GM12878 (cell line): ENCODE measurements at regions of chr2 and their contacts with region 1.

Region 1: GRCh38 chr2:101831351-101831865 is 133.9 kb downstream of the MAP4K4 start:
- DNase-seq: no peak
- ATAC-seq: peak; percentile 91
- H3K4me3 ChIP-seq: no peak overlapping the region
- H3K27ac ChIP-seq: no peak overlapping the region
- H3K4me1 ChIP-seq: peaks cover 6% of the 10 kb centered on the region
- H3K27me3 ChIP-seq: no peaks in the 10 kb centered on the region
- CTCF ChIP-seq: peak; percentile 72 to 79 (median 75)
- EP300 ChIP-seq: no peak
- POLR2A ChIP-seq: no peak
- RAD21 ChIP-seq: peak; percentile 68

Region 2: DNA sequence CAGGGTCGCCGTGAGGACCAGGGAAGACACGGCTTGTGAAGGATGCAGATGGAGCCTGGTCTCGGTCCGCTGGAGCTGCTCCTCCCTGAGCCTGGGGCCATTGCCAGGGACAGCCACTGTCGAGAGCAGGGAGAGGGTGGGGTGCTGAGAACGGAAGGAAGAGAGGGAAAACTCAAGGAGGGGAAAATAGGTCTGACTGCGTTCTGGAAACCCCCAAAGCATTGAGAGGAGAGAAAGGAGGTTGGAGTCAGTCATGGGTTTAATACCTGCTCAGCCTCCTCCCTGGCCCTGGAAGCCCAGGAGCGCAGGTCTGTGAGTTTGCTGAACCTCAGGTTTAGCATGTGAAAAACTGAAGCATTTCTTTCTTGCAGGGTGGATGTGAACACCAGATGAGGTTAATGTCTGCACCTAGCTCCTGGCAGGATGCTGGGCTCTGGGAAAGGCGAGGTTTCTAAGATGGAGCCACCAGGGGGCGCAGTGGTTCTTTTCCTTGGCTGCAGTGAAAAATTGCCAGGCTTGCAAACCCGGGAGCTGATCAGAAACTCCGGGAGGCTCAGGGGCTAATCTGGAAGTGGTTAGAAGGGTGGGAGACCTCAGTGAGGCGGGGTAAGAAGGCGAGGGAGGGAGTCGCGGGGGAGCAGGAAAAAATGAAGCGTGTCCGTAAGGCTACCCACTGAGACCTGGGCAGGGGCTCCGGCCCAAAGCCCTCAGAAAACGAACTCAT is 489.3 kb before region 1 on chr2:
- CTCF ChIA-PET with region 1: interaction called, 32 read pairs
- POLR2A ChIA-PET with region 1: no interaction called
- RAD21 ChIA-PET with region 1: interaction called, 9 read pairs
- SMC1A ChIA-PET with region 1: interaction called, 9 read pairs
- in situ Hi-C with region 1: loop called (anchors 10 kb)
- intact Hi-C with region 1: loop called (anchors 1 kb)
- DNase-seq: no peak
- ATAC-seq: peak; percentile 83
- H3K4me3 ChIP-seq: no peak overlapping the region
- H3K27ac ChIP-seq: no peak overlapping the region
- H3K4me1 ChIP-seq: no peaks in the 10 kb centered on the region
- H3K27me3 ChIP-seq: no peaks in the 10 kb centered on the region; a peak in 1 of 4 replicates
- CTCF ChIP-seq: peak; percentile 78 to 88 (median 82)
- EP300 ChIP-seq: no peak
- POLR2A ChIP-seq: no peak
- RAD21 ChIP-seq: peak; percentile 71

Region 3: DNA sequence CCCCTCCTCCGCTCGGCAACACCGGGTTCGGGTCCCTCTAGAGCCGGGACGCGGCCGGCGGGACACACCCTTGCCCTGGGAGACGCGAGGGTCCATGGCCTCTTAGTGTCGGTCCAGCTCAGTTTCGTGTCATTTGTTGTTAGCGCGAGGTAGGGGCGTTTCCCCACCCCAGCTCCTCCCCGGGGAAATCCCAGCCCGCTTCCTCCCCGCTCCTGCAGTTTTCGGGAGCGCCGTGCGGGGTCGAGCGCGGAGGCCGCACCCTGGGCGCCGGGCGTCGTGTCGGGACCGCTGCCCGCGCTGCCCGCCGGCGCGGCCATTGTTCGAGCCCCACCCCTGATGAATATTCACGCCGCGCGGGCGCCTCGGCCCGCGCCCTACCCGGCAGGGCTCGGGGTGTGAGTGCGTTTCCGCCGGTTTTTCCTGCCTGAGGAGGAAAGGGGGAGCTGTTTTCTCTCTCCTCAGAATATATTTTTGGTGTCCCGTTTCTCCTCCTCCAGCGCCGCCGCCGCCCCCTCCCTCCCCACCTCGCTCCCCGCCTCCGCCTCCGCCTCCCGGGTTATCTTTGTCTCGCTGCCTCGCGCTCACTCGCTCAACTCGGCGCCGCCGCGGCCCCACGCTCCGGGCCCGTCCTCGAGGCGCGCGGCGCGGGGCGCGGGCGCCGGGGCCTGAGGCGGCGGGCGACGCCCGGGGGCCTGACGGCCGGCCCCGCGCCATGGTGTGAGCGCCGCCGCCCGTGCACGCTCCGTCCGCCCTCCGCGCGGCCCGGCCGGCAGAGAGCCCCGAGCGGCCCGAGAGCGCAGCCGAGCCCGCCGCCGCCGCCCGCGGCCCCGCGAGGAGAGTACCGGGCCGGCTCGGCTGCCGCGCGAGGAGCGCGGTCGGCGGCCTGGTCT is 134.0 kb before region 1 on chr2 and contains the start of gene MAP4K4:
- CTCF ChIA-PET with region 1: interaction called, 6 read pairs
- POLR2A ChIA-PET with region 1: no interaction called
- RAD21 ChIA-PET with region 1: interaction called, 9 read pairs
- SMC1A ChIA-PET with region 1: interaction called, 20 read pairs
- in situ Hi-C with region 1: no loop called
- intact Hi-C with region 1: loop called (anchors 5 kb)
- DNase-seq: no peak
- ATAC-seq: peak; percentile 68
- H3K4me3 ChIP-seq: peak within 1 kb of the TSS; percentile 49
- H3K27ac ChIP-seq: no peak within 1 kb of the TSS
- H3K4me1 ChIP-seq: no peaks in the 10 kb centered on the region; the same call in 1 of the 2 replicates
- H3K27me3 ChIP-seq: peaks cover 2 to 22% of the 10 kb centered on the region in 2 experiments; a peak in 3 of 4 replicates
- CTCF ChIP-seq: peak in 1 of 3 experiments; percentile 10; a peak in 1 of 6 replicates
- EP300 ChIP-seq: no peak
- POLR2A ChIP-seq: 0 out of 2 replicates have a peak, but pooled peaks have one; percentile 24
- RAD21 ChIP-seq: no peak
- polyA plus RNA-seq, gene MAP4K4: 1.9 to 2.5 TPM

Region 4: DNA sequence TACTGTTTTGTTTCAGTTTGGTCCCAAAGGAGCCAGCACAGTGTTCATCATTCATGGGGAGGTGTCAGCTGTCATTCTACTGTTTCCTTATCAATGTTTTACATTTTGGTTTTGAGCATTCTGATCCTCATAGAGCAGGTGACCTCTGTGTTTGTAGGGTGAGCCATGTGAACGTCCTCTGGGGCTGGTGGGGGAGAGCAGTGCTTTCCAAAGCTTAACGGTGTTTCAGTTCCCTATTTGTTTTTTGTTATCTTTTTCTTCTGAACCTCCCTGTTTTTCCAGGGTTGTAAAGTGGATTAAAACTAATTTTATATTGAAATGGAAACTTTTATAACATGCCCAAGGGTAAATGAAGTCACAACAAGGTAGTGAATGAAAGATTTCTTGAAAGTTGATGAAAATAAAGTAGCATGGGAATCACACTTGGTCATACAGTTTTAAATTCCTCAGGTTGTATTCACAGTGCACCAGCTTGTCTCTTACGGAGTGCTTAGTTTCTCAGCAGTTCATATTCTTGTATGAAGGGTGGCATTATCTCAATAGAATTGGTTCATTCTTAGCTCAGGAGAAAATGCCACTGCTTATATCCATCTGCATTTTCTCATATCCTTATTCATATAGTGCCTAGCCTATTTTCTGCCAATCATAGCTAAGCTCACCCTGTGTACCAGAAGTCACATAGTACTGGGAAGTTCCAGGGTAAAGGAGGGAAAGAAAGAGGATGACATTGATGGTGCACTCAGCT is 79.4 kb before region 1 on chr2:
- CTCF ChIA-PET with region 1: interaction called, 4 read pairs
- POLR2A ChIA-PET with region 1: interaction called, 3 read pairs
- RAD21 ChIA-PET with region 1: interaction called, 12 read pairs
- SMC1A ChIA-PET with region 1: interaction called, 8 read pairs
- in situ Hi-C with region 1: no loop called
- intact Hi-C with region 1: loop called (anchors 5 kb)
- DNase-seq: peak; percentile 66
- ATAC-seq: peak; percentile 80
- H3K4me3 ChIP-seq: no peak overlapping the region
- H3K27ac ChIP-seq: no peak overlapping the region
- H3K4me1 ChIP-seq: peaks cover 49% of the 10 kb centered on the region
- H3K27me3 ChIP-seq: no peaks in the 10 kb centered on the region
- CTCF ChIP-seq: no peak
- EP300 ChIP-seq: peak; percentile 92 to 95; a peak in 3 of 4 replicates
- POLR2A ChIP-seq: no peak
- RAD21 ChIP-seq: no peak

Region 5: DNA sequence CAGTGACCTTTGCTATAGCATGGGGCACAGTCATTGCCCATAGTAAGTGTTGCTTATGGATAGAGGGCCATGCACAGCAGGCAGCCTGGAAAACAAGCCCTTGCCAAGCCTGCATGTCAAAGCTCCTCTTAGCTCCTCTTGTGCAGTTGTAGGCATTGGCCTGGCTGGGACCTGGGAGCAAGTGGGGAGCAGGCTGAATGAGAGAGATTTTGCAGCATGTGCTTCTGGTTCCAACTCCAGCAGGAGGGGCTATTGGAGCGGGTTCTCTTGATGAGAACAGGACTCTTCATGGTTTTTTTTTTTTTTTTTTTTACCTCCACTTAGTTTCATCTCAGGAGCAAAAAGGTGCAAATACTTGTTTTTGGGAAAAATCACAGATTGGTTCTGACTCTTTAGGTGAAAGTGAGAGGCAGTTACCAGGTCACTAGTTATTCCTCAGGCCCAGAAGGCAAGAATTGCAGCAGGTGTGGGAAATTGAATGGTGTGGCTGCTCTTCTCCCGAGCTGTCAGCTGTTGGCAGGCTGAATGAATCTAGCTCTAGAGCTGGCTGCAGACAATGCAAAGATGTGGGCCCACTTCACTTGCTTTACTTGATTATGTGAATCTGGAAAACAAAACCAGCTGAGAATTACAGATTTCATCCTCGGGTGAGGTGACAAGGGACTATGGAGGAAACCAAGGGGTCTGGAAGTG is 38.0 kb before region 1 on chr2:
- CTCF ChIA-PET with region 1: interaction called, 15 read pairs
- POLR2A ChIA-PET with region 1: no interaction called
- RAD21 ChIA-PET with region 1: interaction called, 4 read pairs
- SMC1A ChIA-PET with region 1: interaction called, 4 read pairs
- in situ Hi-C with region 1: no loop called
- intact Hi-C with region 1: no loop called
- DNase-seq: no peak
- ATAC-seq: no peak; the same call in 2 of the 3 replicates
- H3K4me3 ChIP-seq: no peak overlapping the region
- H3K27ac ChIP-seq: no peak overlapping the region
- H3K4me1 ChIP-seq: no peaks in the 10 kb centered on the region
- H3K27me3 ChIP-seq: no peaks in the 10 kb centered on the region
- CTCF ChIP-seq: peak in 1 of 3 experiments; percentile 14; a peak in 1 of 6 replicates
- EP300 ChIP-seq: no peak
- POLR2A ChIP-seq: no peak
- RAD21 ChIP-seq: 0 out of 2 replicates have a peak, but pooled peaks have one; percentile 22

Region 6: GRCh38 chr2:101850450-101850849 is 19.0 kb after region 1 on chr2:
- CTCF ChIA-PET with region 1: interaction called, 10 read pairs
- POLR2A ChIA-PET with region 1: interaction called, 3 read pairs
- RAD21 ChIA-PET with region 1: interaction called, 3 read pairs
- SMC1A ChIA-PET with region 1: interaction called, 4 read pairs
- in situ Hi-C with region 1: no loop called
- intact Hi-C with region 1: no loop called
- DNase-seq: no peak
- ATAC-seq: no peak
- H3K4me3 ChIP-seq: no peak overlapping the region
- H3K27ac ChIP-seq: no peak overlapping the region
- H3K4me1 ChIP-seq: no peaks in the 10 kb centered on the region
- H3K27me3 ChIP-seq: no peaks in the 10 kb centered on the region
- CTCF ChIP-seq: no peak
- EP300 ChIP-seq: no peak
- POLR2A ChIP-seq: no peak
- RAD21 ChIP-seq: no peak

Region 7: GRCh38 chr2:102155642-102156491 is 324.5 kb after region 1 on chr2:
- CTCF ChIA-PET with region 1: no interaction called
- POLR2A ChIA-PET with region 1: no interaction called
- RAD21 ChIA-PET with region 1: no interaction called
- SMC1A ChIA-PET with region 1: no interaction called
- in situ Hi-C with region 1: no loop called
- intact Hi-C with region 1: no loop called
- DNase-seq: no peak
- ATAC-seq: no peak
- H3K4me3 ChIP-seq: no peak overlapping the region
- H3K27ac ChIP-seq: no peak overlapping the region
- H3K4me1 ChIP-seq: no peaks in the 10 kb centered on the region
- H3K27me3 ChIP-seq: no peaks in the 10 kb centered on the region
- CTCF ChIP-seq: no peak
- EP300 ChIP-seq: no peak
- POLR2A ChIP-seq: no peak
- RAD21 ChIP-seq: no peak